ENCODE measurements at regions of chr3 and their contacts with region 1.

Region 1: DNA sequence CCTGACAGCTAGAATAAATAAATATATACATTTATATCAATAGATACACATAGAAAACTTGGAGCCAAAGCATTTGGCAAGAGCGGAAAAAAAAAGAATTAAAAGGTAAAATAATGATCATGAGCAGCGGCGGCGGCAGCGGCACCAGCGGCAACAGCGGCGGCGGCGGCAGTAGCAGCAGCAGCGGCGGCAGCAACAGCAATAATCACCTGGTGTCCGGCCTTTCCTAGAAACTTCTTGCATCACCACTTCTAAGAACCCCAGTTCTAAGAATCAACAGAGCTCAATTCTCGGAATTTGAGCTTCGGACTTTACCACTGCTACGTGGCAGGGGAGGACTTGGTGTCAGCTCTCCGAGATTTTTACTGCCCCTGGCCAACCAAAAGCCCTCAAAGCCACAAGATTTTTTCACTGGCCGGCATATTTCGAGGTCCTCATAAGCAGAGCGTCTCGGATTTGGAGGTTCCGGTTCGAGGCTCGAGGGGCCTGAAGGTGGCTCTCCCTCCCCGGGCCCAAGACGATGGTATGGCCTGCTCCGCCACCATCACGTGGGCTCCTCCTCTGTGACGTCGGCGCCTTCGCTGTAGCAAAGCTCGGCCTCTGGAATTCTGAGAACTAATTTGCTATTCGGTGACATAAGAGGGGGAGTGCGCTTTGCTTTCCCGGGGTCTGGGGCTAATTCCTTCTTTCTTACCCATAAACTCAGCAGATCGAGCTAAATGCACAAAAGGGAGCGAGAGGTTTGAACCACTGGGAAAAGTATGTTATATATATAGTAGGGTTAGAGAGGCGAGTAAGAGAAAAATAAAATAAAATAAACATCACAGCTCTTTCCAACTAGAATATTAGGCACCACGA is at the start of gene BCL6:
- DNase-seq: peak; percentile 94 to 96 (median 95)
- H3K4me3 ChIP-seq: peak within 1 kb of the TSS; percentile 88
- H3K27ac ChIP-seq: peak within 1 kb of the TSS; percentile 94 to 100
- H3K4me1 ChIP-seq: no peaks in the 10 kb centered on the region
- H3K27me3 ChIP-seq: no peaks in the 10 kb centered on the region
- CTCF ChIP-seq: peak in 2 of 3 donors; percentile 21 to 26
- EP300 ChIP-seq: peak; percentile 99
- POLR2A ChIP-seq: peak; percentile 93
- total RNA-seq, gene BCL6: 51.6 to 91.1 (median 60.2) TPM

Region 2: GRCh38 chr3:187669675-187670504 is 75.5 kb before region 1 on chr3 and contains the start of gene SST:
- intact Hi-C with region 1: no loop called
- DNase-seq: peak in 4 of 5 donors; percentile 18 to 75 (median 51)
- H3K4me3 ChIP-seq: no peak within 1 kb of the TSS
- H3K27ac ChIP-seq: no peak within 1 kb of the TSS
- H3K4me1 ChIP-seq: no peaks in the 10 kb centered on the region
- H3K27me3 ChIP-seq: no peaks in the 10 kb centered on the region
- CTCF ChIP-seq: no peak
- EP300 ChIP-seq: no peak
- POLR2A ChIP-seq: no peak
- total RNA-seq, gene SST: 0.55 to 7.5 (median 0.90) TPM in 4 of 7 donors, not detected in the others

Region 3: GRCh38 chr3:187902041-187902471 is 156.6 kb after region 1 on chr3:
- intact Hi-C with region 1: loop called in 1 of 4 experiments (anchors 10 kb)
- DNase-seq: no peak
- H3K4me3 ChIP-seq: no peak overlapping the region
- H3K27ac ChIP-seq: no peak overlapping the region
- H3K4me1 ChIP-seq: no peaks in the 10 kb centered on the region
- H3K27me3 ChIP-seq: no peaks in the 10 kb centered on the region
- CTCF ChIP-seq: no peak
- EP300 ChIP-seq: no peak
- POLR2A ChIP-seq: no peak

Region 4: DNA sequence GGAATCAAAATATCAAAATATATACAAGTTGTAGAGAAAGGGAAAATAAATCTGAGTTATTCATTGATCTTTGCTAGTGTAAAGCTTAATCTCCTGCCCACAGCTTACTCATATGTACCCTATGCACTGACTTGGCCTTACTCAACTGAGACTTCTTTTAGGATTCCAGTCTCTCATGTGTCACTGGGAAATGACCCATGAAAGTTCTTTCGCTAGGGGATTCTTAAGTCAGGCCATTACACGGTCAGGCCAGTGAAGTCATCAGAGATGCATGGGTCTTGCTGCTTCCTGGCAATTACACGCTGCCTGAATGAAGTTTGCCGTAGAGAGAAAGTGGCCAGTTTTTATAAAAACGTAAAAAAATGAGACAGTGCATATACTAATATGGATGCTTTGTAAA is 387.8 kb after region 1 on chr3:
- intact Hi-C with region 1: no loop called
- DNase-seq: no peak
- H3K4me3 ChIP-seq: no peak overlapping the region
- H3K27ac ChIP-seq: no peak overlapping the region
- H3K4me1 ChIP-seq: no peaks in the 10 kb centered on the region
- H3K27me3 ChIP-seq: no peaks in the 10 kb centered on the region
- CTCF ChIP-seq: no peak
- EP300 ChIP-seq: no peak
- POLR2A ChIP-seq: no peak

Region 5: DNA sequence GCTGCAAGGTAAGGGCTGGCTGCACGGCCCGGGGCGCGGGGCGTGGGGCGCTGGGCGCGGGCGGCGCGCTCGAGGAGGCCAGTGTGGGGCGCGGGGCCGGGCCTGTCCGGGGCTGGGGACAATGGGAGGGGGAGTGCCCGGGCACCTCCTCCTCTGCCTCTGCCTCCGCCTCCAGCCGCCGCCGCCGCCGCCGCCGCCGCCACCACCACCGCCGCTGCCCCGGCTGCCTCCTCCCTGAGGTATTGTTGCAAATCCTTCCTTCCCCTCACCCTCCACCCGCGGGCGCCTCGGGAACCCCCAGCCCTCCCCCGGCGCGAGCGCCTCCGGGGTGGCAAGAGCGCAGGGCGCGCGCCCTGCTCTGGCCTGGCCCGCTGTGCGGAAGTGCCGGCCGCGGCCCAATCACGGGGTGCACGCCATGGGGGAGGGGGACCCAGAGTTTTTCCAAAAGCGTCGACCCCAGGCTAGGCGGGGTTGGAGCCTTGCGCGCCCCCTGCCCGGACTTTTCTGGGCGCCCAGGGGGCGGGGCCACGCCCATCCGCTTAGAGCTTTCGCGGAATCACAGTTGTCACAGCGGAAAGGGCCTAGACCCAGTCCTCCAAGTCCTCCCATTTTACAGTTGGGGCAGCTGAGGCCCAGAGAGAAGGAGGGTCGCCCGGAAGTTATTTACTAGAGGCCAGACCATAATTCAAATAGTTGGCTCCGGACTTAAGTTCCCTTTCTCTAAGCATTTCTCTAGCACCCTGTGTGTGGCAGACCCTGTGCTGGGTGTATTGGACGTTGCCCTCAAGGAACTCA is 408.8 kb after region 1 on chr3 and contains the start of gene LPP:
- intact Hi-C with region 1: loop called in 2 of 4 experiments (anchors 5 to 10 kb)
- DNase-seq: peak; percentile 59 to 84 (median 77)
- H3K4me3 ChIP-seq: peak within 1 kb of the TSS; percentile 70
- H3K27ac ChIP-seq: peak within 1 kb of the TSS; percentile 81 to 91
- H3K4me1 ChIP-seq: peaks cover 10% of the 10 kb centered on the region
- H3K27me3 ChIP-seq: no peaks in the 10 kb centered on the region
- CTCF ChIP-seq: peak in 1 of 3 donors; percentile 5
- EP300 ChIP-seq: no peak
- POLR2A ChIP-seq: no peak
- total RNA-seq, gene LPP: 80.6 to 280 (median 165) TPM

Region 6: DNA sequence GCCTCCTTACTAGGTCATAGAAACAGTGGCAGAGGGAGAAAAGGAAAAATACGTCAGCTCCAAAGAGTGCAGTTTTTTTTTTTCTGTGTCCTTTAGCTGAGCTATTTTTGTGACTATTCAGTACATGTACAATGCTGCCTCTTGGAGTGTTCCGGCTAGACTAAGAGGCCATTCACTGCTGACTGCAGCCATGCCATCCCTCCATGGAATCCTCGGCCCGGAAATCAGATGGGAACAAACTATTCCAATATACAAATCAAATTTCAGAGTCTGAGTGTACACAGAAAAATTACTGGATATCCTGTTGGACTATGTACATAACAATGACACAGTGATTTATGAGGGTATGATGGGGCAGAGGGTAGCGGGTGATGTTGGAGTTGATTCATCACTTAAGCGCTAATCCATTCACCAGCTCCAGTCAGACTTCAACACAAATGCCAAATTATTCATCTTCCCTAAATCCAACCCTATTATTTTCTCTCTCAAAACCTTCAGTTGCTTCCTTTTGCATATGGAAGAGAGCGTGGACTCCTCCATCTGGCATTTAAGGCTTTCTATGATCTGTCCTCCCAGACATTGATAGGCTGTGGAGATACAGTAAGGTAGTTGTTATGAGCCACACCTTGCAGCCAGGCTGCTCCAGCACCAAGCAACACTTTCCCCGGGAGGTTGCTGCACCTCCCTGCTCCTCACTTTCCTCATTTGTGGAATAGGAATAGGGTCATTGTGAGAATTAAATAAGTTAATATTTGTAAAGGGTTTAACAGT is 517.7 kb after region 1 on chr3:
- intact Hi-C with region 1: loop called in 1 of 4 experiments (anchors 2 kb)
- DNase-seq: no peak
- H3K4me3 ChIP-seq: no peak overlapping the region
- H3K27ac ChIP-seq: no peak overlapping the region
- H3K4me1 ChIP-seq: peaks cover 15% of the 10 kb centered on the region
- H3K27me3 ChIP-seq: no peaks in the 10 kb centered on the region
- CTCF ChIP-seq: no peak
- EP300 ChIP-seq: no peak
- POLR2A ChIP-seq: no peak

Region 7: DNA sequence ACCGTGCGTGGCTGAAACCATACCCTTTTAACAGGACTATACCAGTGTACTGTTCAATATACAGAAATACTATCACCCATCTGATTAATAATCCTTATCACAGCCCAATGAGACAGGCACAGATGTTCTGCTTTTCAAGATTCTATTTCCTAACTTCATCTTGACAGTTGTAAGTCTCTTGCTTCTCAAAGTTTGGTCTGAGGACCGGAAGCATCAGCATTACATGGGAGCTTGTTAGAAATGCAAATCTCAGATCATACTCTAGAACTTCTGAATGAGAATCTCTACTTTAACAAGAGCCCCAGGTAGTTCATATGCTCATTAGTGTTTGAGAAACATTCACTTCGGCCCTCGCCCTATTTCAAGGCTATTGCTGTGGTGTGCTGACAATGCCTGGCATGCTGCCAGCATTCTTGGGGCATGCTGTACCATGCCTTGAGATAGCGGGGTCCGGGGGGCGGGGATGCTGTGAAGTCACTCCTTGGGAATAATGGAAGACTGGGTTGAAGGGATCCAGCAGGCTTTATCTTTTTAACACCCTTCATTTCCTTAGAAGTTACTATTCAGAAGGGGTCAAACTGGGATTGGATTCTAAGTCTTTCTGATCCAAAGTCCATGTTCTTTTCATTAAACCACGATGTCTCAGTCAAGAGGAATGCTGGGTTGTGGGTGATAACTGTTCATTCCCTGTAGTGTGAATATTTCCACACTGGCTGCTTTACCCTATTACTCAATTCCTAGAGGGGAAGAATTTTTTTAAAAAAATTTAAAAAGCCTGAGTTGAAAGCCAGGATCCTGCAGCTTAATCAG is 603.2 kb after region 1 on chr3:
- intact Hi-C with region 1: loop called in 1 of 4 experiments (anchors 10 kb)
- DNase-seq: peak; percentile 71 to 90 (median 83)
- H3K4me3 ChIP-seq: no peak overlapping the region
- H3K27ac ChIP-seq: peak overlapping the region; percentile 17 to 55
- H3K4me1 ChIP-seq: peaks cover 19% of the 10 kb centered on the region
- H3K27me3 ChIP-seq: no peaks in the 10 kb centered on the region
- CTCF ChIP-seq: no peak
- EP300 ChIP-seq: no peak
- POLR2A ChIP-seq: no peak

Region 8: DNA sequence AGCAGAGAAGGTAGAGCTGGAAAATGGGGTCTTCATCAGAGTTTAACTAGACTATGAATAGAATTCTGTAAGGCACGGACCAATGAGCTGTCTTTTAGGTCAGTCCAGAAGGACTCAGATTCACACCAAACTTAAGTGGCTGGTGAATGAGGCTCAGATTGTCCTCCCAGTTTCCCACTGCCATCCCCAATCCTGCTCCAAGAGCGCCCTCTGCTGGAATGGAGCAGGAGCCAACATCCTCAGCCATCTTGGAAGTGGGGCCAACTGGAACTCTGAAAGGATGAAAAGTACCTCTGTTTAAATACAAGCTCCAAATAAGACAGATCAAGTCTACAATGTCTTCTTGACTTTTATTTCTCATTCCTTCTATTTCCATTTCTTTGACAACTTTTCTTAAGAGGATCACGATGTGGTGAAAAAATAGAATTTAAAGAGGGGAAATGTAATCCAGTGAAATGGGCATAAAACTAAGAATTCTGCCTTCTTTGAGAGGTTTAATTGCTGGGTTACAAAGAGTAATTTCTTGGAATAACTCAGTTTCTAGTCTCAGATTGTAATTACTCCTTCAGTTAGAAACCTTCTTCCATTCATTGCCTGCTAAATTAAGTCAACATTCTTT is 1209.3 kb after region 1 on chr3:
- intact Hi-C with region 1: loop called in 3 of 4 experiments (anchors 2 to 5 kb)
- DNase-seq: peak; percentile 85 to 92 (median 87)
- H3K4me3 ChIP-seq: no peak overlapping the region
- H3K27ac ChIP-seq: no peak overlapping the region
- H3K4me1 ChIP-seq: peaks cover 8% of the 10 kb centered on the region
- H3K27me3 ChIP-seq: no peaks in the 10 kb centered on the region
- CTCF ChIP-seq: peak; percentile 73 to 96 (median 90)
- EP300 ChIP-seq: no peak
- POLR2A ChIP-seq: no peak

Measured in ovary (tissue), 10 donors.